IMR-90 (cell line): ENCODE measurements at regions of chr17 and their contacts with region 1.

Region 1: DNA sequence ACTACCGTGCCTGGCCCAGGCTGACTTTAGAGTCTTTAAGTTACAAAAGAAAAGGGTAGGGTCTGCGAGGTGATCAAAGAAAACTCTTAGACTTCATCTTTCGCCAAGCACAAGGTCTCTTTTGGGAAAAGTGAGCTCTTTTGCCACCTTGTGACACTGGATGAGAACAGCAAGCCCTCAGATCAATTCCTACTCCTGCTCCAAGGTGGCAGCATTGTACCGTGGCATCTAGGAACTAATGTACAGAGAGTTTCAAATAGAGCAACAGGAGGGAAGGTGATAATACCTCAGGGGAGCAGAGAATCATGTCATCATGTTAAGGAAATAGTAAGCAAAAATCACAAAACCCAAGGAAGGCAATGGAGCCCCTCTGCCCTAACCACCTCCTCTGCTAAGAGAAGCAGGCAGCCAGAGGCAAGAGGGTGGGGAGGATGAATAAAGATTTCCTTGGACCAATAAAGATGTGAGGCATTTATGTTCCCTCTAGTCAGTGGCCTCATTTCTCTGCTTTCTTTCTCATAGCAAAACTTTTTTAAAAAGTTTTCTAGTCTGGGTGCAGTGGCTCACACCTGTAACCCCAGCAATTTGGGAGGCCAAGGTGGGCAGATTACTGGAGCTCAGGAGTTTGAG is 2.1 kb upstream of the C17orf78 start:
- DNase-seq: peak; percentile 87
- ATAC-seq: peak; percentile 100
- H3K4me3 ChIP-seq: no peak overlapping the region
- H3K27ac ChIP-seq: no peak overlapping the region
- H3K4me1 ChIP-seq: no peaks in the 10 kb centered on the region; the same call in 1 of the 2 replicates
- H3K27me3 ChIP-seq: no peaks in the 10 kb centered on the region
- CTCF ChIP-seq: peak; percentile 100; the same call in 1 of the 2 replicates
- POLR2A ChIP-seq: peak; percentile 48; the same call in 1 of the 2 replicates
- RAD21 ChIP-seq: peak; percentile 100

Region 2: DNA sequence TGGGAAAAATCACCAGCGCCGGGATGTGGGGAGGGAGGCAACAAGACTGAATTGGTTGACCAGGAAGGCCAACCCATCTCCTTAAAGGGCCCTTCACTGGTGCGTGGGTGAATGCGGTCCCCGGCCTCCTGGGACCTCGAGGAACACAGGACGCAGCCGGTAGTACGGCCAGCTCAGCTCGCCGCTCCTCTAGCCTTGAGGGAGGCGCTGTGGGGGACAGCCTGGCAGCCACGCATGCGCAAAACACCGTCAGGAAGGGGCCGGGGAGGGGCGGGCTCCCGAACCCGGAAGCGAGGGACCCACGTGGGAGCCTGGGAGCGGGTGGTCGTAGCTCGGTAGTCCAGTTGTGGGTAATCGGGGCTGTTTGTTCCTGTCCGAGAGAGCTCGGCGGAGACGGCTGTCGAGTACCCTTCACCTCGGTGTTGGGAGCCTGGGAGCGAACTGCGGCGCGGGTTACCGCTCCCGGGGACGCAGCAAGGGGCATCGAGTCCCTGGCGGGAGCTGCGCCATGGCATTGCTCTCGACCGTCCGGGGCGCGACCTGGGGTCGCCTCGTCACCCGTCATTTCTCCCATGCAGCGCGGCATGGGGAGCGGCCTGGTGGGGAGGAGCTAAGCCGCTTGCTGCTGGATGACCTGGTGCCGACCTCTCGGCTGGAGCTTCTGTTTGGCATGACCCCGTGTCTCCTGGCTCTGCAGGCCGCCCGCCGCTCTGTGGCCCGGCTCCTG is 772.2 kb before region 1 on chr17 and contains the start of gene MRM1:
- CTCF ChIA-PET with region 1: interaction called, 6 read pairs
- POLR2A ChIA-PET with region 1: no interaction called
- dilution Hi-C with region 1: no loop called
- in situ Hi-C with region 1: loop called (anchors 10 kb)
- intact Hi-C with region 1: loop called (anchors 2 kb)
- DNase-seq: peak; percentile 89
- ATAC-seq: peak; percentile 93
- H3K4me3 ChIP-seq: peak within 1 kb of the TSS; percentile 79
- H3K27ac ChIP-seq: peak within 1 kb of the TSS; percentile 74
- H3K4me1 ChIP-seq: peaks cover 6% of the 10 kb centered on the region
- H3K27me3 ChIP-seq: no peaks in the 10 kb centered on the region
- CTCF ChIP-seq: peak; percentile 23; the same call in 1 of the 2 replicates
- POLR2A ChIP-seq: peak; percentile 81
- RAD21 ChIP-seq: no peak
- total RNA-seq, gene MRM1: 2.2 TPM in 2 replicates

Region 3: DNA sequence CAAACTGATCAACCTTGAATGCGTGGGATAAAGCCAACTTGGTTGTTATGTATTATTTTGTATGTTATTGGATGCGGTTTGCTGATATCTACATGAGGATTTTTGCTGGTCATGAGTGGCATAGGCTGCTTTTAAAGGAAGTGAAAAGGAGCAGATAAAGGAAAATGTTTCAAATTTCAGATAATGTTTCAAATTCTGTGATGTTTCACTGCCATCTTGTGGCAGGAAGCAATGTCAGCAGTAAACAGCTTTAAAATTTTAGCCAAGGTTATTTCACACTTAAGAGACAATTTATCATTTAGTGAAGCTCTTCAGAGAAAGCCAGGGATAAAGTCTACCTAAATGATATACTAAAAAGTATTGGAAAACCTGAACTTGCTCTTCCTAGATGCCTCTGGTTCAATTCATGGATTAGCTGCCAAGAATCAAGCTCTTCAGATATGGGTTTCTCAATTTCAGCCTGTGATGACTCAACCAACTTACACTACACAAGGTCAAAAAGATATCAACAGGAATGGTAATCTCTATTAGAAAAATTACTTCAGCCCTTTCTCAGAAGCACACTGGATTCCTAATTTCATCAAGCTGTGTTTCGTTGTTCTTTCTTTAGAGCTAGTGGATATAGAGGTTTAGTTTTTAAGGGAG is 133.8 kb before region 1 on chr17:
- CTCF ChIA-PET with region 1: interaction called, 7 read pairs
- POLR2A ChIA-PET with region 1: no interaction called
- dilution Hi-C with region 1: no loop called
- in situ Hi-C with region 1: no loop called
- intact Hi-C with region 1: loop called (anchors 1 kb)
- DNase-seq: peak; percentile 72
- ATAC-seq: peak; percentile 86
- H3K4me3 ChIP-seq: no peak overlapping the region
- H3K27ac ChIP-seq: no peak overlapping the region
- H3K4me1 ChIP-seq: peaks cover 2% of the 10 kb centered on the region; the same call in 1 of the 2 replicates
- H3K27me3 ChIP-seq: no peaks in the 10 kb centered on the region
- CTCF ChIP-seq: peak; percentile 75
- POLR2A ChIP-seq: no peak
- RAD21 ChIP-seq: peak; percentile 67

Region 4: GRCh38 chr17:37392024-37392590 is 18.5 kb after region 1 on chr17:
- CTCF ChIA-PET with region 1: interaction called, 28 read pairs
- POLR2A ChIA-PET with region 1: no interaction called
- dilution Hi-C with region 1: no loop called
- in situ Hi-C with region 1: no loop called
- intact Hi-C with region 1: loop called (anchors 1 kb)
- DNase-seq: peak; percentile 90
- ATAC-seq: peak; percentile 89
- H3K4me3 ChIP-seq: no peak overlapping the region
- H3K27ac ChIP-seq: no peak overlapping the region
- H3K4me1 ChIP-seq: peaks cover 7% of the 10 kb centered on the region
- H3K27me3 ChIP-seq: no peaks in the 10 kb centered on the region
- CTCF ChIP-seq: no peak
- POLR2A ChIP-seq: no peak
- RAD21 ChIP-seq: no peak

Region 5: DNA sequence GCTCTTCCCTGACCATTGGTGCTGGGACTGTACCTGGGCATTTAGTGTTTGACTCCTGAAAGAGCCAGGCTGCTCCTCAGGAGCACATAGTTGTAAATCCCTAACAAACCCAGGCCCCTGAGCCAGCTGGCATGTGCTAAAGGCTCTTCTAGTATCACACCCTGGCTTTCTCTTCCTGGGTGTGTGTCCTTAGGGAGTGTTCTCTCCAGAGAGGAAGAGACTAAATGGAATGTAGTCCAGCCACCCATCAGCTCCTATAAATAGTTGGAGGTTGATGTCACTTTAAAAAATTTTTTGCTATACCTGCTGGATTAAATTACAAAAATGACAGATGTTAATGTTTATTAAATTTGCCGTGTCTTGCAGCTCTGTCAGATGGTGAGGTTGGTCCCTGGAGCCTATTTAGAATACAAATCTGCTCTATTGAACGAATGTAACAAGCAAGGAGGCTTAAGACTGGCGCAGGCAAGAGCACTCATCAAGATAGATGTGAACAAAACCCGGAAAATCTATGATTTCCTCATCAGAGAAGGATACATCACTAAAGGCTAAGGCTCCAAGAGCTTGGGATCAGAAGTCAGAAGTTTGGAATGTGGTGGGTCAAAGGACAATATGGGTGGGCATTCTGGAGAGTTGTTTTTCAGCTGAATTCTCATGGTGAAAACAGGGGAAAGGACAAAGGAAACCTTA is 102.9 kb after region 1 on chr17:
- CTCF ChIA-PET with region 1: no interaction called
- POLR2A ChIA-PET with region 1: no interaction called
- dilution Hi-C with region 1: no loop called
- in situ Hi-C with region 1: no loop called
- intact Hi-C with region 1: no loop called
- DNase-seq: peak; percentile 55
- ATAC-seq: peak; percentile 72
- H3K4me3 ChIP-seq: no peak overlapping the region
- H3K27ac ChIP-seq: peak overlapping the region; percentile 36; the same call in 1 of the 2 replicates
- H3K4me1 ChIP-seq: peaks cover 5% of the 10 kb centered on the region
- H3K27me3 ChIP-seq: no peaks in the 10 kb centered on the region
- CTCF ChIP-seq: no peak
- POLR2A ChIP-seq: no peak
- RAD21 ChIP-seq: no peak

Region 6: GRCh38 chr17:37576281-37576680 is 202.6 kb after region 1 on chr17:
- CTCF ChIA-PET with region 1: interaction called, 14 read pairs
- POLR2A ChIA-PET with region 1: no interaction called
- dilution Hi-C with region 1: no loop called
- in situ Hi-C with region 1: no loop called
- intact Hi-C with region 1: no loop called
- DNase-seq: peak; percentile 27
- ATAC-seq: no peak
- H3K4me3 ChIP-seq: no peak overlapping the region
- H3K27ac ChIP-seq: no peak overlapping the region
- H3K4me1 ChIP-seq: no peaks in the 10 kb centered on the region
- H3K27me3 ChIP-seq: no peaks in the 10 kb centered on the region
- CTCF ChIP-seq: no peak
- POLR2A ChIP-seq: no peak
- RAD21 ChIP-seq: no peak